ENCODE measurements at regions of chr22 and their contacts with region 1.

Region 1: GRCh38 chr22:29625090-29625825 is 21.8 kb downstream of the NF2 start:
- DNase-seq: peak; percentile 69
- H3K4me3 ChIP-seq: peak overlapping the region in 1 of 3 experiments; percentile 10
- H3K27ac ChIP-seq: peak overlapping the region; percentile 65
- H3K4me1 ChIP-seq: peaks cover 77% of the 10 kb centered on the region
- H3K27me3 ChIP-seq: no peaks in the 10 kb centered on the region
- CTCF ChIP-seq: peak; percentile 86 to 95

Region 2: DNA sequence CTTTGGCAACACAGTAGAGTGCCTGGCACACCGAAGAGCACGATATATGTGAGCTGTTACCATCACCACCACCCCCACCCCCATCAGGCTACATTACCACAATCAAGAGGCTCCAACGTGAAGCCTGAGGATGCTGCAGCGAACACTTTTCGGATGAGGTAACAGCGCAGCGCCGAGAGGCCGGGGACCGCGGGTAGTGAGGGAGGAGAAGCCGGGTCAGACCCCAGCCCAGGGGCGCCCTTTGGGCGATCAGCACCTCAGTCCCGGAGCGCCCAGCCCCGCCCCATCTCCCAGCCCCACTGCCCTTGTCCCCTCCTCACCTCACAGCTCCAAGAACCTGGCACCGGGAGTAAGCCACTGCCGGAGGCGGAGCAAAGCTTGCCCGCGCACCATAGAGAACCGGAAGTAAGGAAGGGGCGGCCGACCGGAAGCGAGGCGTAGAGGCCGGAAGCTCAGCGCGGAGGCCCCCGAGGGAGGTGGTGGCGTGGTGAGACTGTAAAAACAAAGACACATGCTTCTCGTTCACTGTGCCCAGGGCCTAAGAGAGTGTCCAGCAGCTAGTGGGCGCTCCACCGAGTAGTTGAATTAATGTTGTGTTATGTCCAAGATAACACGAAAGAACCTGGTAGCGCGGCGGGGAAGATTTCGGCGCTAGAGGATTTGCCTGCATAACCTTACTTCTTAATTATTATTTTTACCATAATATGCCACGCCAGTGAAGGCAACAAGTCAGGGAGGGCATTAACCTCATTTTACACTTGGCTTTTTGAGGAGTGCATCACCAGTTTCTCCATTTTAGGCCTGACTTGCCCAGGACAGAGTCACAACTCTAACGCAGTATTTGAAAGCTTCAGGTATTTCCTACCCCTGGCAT is 71.7 kb before region 1 on chr22 and contains the start of gene THOC5:
- CTCF ChIA-PET with region 1: interaction called, 3 read pairs
- dilution Hi-C with region 1: no loop called
- in situ Hi-C with region 1: no loop called
- intact Hi-C with region 1: loop called (anchors 5 kb)
- DNase-seq: peak; percentile 95
- H3K4me3 ChIP-seq: peak within 1 kb of the TSS; percentile 65 to 94 (median 80)
- H3K27ac ChIP-seq: peak within 1 kb of the TSS; percentile 63
- H3K4me1 ChIP-seq: peaks cover 8% of the 10 kb centered on the region
- H3K27me3 ChIP-seq: no peaks in the 10 kb centered on the region
- CTCF ChIP-seq: peak; percentile 53 to 63
- total RNA-seq, gene THOC5: 46.3 to 56.2 TPM

Region 3: DNA sequence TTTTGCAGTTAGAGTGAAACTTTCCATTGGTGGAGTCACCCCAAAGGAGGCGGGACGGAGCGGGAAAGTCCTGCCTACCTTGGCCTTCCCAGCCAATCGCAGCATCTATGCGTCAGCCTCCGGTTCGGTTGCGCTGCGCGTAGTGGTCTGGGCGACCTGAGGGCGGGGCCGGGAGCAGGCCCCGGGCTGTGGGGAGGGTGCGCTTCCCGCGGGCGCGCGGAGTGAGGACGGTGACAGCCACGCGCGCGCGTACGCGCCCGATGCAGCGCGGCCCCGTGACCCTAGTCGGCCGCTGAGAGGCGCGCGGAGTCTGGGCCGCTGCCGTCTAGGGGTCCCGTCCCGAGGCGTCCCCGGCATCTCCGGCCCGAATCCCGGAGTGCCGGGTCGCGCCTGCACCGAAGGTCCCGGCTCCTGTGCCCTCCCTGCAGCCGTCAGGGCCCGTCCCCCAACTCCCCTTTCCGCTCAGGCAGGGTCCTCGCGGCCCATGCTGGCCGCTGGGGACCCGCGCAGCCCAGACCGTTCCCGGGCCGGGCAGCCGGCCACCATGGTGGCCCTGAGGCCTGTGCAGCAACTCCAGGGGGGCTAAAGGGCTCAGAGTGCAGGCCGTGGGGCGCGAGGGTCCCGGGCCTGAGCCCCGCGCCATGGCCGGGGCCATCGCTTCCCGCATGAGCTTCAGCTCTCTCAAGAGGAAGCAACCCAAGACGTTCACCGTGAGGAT is 21.7 kb before region 1 on chr22 and contains the start of gene NF2:
- CTCF ChIA-PET with region 1: interaction called, 3 read pairs
- dilution Hi-C with region 1: no loop called
- in situ Hi-C with region 1: no loop called
- intact Hi-C with region 1: loop called (anchors 1 kb)
- DNase-seq: peak; percentile 99
- H3K4me3 ChIP-seq: peak within 1 kb of the TSS; percentile 76 to 90 (median 86)
- H3K27ac ChIP-seq: peak within 1 kb of the TSS; percentile 78
- H3K4me1 ChIP-seq: peaks cover 10% of the 10 kb centered on the region
- H3K27me3 ChIP-seq: no peaks in the 10 kb centered on the region
- CTCF ChIP-seq: peak in 1 of 2 donors; percentile 9
- total RNA-seq, gene NF2: 95.2 to 138 TPM

Region 4: GRCh38 chr22:29663180-29663821 is 38.0 kb after region 1 on chr22:
- CTCF ChIA-PET with region 1: no interaction called
- dilution Hi-C with region 1: no loop called
- in situ Hi-C with region 1: no loop called
- intact Hi-C with region 1: loop called (anchors 2 kb)
- DNase-seq: peak; percentile 55
- H3K4me3 ChIP-seq: no peak overlapping the region
- H3K27ac ChIP-seq: no peak overlapping the region
- H3K4me1 ChIP-seq: peaks cover 35% of the 10 kb centered on the region
- H3K27me3 ChIP-seq: no peaks in the 10 kb centered on the region
- CTCF ChIP-seq: no peak

Region 5: GRCh38 chr22:29784451-29785361 is 159.4 kb after region 1 on chr22:
- CTCF ChIA-PET with region 1: no interaction called
- dilution Hi-C with region 1: no loop called
- in situ Hi-C with region 1: no loop called
- intact Hi-C with region 1: no loop called
- DNase-seq: no peak
- H3K4me3 ChIP-seq: no peak overlapping the region
- H3K27ac ChIP-seq: no peak overlapping the region
- H3K4me1 ChIP-seq: peaks cover 30% of the 10 kb centered on the region
- H3K27me3 ChIP-seq: no peaks in the 10 kb centered on the region
- CTCF ChIP-seq: no peak

Region 6: DNA sequence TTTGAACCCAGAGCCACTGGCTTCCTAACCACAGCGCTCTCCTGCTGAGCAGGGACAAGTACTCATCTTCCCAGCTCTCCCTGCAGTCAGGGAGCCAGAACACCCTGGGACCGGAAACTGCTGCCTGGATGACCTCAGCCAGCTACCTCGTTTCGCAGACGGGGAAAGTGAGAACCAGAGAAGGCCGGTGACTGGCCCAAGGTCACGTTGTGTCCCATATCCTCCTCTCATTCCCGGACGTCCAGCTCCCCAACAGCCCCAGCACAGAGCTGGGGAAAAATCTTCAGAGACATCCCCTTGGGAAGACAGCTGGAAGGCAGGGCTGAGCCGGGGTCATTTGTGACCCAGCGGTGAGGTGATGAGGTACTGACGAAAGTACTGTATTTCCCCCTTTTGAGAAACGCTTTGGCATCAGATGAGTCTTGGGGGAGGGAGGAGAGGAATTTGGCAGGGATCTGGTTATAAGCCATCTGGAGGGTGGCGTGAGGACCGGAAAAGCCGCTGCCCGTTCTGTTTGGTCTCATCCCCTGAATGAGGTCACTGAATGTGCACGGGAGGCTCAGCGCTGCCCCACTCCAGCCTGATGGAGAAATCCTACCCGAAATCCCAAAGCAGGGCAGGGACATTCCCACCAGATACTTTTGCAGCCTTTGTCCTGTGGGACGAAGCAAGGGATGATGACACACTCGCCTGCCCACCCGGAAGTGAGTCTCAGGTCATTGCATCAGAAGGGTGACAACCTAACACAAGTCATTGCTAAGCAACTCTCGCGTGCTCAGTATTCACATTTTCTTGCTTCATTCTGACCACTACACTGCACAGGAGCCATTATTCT is 580.2 kb after region 1 on chr22:
- CTCF ChIA-PET with region 1: no interaction called
- dilution Hi-C with region 1: no loop called
- in situ Hi-C with region 1: no loop called
- intact Hi-C with region 1: loop called (anchors 2 kb)
- DNase-seq: peak; percentile 99
- H3K4me3 ChIP-seq: no peak overlapping the region
- H3K27ac ChIP-seq: peak overlapping the region; percentile 97
- H3K4me1 ChIP-seq: peaks cover 60% of the 10 kb centered on the region
- H3K27me3 ChIP-seq: no peaks in the 10 kb centered on the region
- CTCF ChIP-seq: no peak

Measured in mammary epithelial cell (primary cell).